Activated CD4-positive, alpha-beta T cell treated with anti-CD3 and anti-CD28 coated beads, Interleukin-2, amount 10 ng/mL, durations not matched to agents 24 days and 14 days (primary cell): ENCODE measurements at regions of chr3 and their contacts with region 1.

Region 1: DNA sequence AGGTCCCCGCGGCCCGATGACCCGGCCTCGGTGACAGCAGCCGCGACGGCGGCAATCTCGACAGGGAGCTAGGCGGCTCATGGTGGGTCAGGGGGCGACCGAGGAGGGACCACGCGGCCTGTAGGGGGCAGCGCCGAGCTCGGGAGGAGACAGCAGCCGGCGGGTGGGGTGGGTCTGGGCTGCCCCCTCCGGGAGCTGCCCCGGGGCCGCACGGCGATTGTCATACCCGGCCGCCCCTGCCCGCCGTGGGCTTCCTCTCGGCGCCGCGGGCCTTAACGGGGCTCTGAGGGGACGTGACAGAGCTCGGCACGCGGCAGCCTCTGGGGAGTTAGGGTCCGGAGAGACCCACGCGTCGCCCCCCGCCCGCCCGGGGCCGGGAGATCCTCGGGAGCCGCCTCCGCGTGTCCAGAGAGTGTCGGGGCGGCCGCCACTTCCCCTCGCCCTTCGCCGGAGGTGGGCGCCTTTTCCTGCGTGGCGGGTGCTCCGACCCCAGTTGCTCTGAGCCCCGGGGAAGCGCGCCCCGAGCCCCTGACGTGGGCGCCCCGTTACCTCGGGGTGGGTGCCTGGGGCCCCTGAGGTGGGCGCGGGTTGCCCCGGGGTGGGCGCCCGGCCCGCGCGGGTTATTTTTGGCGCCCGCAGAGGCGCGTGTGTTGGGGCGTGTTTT is 539 bp upstream of the PLCL2 start:
- DNase-seq: peak; percentile 89
- H3K4me3 Mint-ChIP-seq: peak overlapping the region; percentile 92
- H3K27ac Mint-ChIP-seq: peak overlapping the region; percentile 98
- H3K4me1 Mint-ChIP-seq: peaks cover 32% of the 10 kb centered on the region
- H3K27me3 Mint-ChIP-seq: peaks cover 10% of the 10 kb centered on the region

Region 2: GRCh38 chr3:16264708-16265454 is 619.3 kb before region 1 on chr3 and contains the starts of genes DPH3 and OXNAD1:
- intact Hi-C with region 1: loop called (anchors 5 kb)
- DNase-seq: peak; percentile 100
- H3K4me3 Mint-ChIP-seq: peak within 1 kb of the TSS; percentile 97
- H3K27ac Mint-ChIP-seq: peak within 1 kb of the TSS; percentile 98
- H3K4me1 Mint-ChIP-seq: peaks cover 33% of the 10 kb centered on the region
- H3K27me3 Mint-ChIP-seq: no peaks in the 10 kb centered on the region
- total RNA-seq, gene DPH3: 27.6 and 30.1 TPM in 2 replicates
- total RNA-seq, gene OXNAD1: 27.1 and 29.8 TPM in 2 replicates

Region 3: GRCh38 chr3:16482770-16483531 is 401.3 kb before region 1 on chr3:
- intact Hi-C with region 1: no loop called
- DNase-seq: peak; percentile 81
- H3K4me3 Mint-ChIP-seq: peak overlapping the region; percentile 69
- H3K27ac Mint-ChIP-seq: peak overlapping the region; percentile 69
- H3K4me1 Mint-ChIP-seq: peaks cover 72% of the 10 kb centered on the region
- H3K27me3 Mint-ChIP-seq: no peaks in the 10 kb centered on the region

Region 4: DNA sequence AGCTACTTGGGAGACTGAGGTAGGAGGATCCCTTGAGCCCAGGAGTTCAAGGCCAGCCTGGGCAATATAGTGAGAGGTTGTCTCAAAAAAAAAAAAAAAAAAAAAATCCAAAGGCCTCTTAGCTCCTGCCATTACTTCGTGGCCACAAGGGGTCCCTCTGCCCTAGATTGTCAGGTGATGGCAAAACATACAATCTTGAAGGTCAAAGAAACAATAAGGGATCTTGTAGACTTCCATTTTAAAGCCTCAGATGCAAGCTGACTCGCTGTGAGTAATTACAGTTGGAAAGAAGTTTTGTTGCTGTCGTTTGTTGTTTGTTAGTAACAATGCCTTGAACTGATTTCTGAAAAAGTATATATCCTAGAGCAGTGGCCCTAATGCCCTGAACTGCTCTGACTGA is 55.4 kb before region 1 on chr3:
- intact Hi-C with region 1: loop called (anchors 2 kb)
- DNase-seq: peak; percentile 84
- H3K4me3 Mint-ChIP-seq: no peak overlapping the region
- H3K27ac Mint-ChIP-seq: no peak overlapping the region
- H3K4me1 Mint-ChIP-seq: peaks cover 16% of the 10 kb centered on the region
- H3K27me3 Mint-ChIP-seq: peaks cover 9% of the 10 kb centered on the region

Region 5: DNA sequence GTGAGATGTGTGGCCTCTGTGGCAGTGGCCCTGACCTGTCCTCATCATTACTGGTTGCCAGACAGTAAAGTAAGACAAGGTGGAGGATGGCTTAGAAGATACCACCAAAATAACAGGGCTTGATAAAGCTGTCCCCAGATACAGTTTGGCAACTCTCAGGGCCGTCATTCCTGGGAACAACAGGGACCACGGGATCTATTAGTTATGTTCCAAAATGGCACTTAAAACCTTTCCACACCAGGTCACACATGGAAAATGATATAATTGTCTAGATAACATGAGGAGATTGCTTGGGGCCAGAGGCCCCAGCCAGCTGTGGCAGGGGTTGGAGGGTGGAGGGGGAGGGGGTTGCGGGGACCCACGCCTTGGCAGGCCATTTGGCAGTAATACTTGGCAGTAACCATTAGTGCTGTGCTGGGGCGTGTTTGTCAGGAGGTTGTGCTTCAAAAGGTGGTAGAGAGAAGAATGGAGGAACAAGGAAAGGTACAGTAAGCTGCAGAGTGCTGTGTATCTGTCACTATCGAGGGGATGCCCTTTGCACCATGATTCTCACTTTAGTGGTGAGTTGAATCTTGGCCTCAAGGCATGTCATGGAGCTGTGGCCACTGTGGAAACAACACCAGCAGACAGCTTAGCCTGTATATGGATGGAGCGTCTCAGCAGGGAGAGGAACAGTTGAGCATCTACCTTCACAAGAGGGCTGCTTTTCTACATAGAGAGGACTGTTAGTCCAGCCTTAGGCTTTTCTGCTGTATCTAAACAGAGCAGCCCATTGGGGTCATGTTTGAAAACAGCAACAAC is 14.6 kb after region 1 on chr3:
- intact Hi-C with region 1: loop called (anchors 1 kb)
- DNase-seq: no peak
- H3K4me3 Mint-ChIP-seq: peak overlapping the region; percentile 20
- H3K27ac Mint-ChIP-seq: no peak overlapping the region
- H3K4me1 Mint-ChIP-seq: peaks cover 75% of the 10 kb centered on the region
- H3K27me3 Mint-ChIP-seq: no peaks in the 10 kb centered on the region

Region 6: GRCh38 chr3:16961621-16962205 is 77.5 kb after region 1 on chr3:
- intact Hi-C with region 1: no loop called
- DNase-seq: no peak
- H3K4me3 Mint-ChIP-seq: no peak overlapping the region
- H3K27ac Mint-ChIP-seq: no peak overlapping the region
- H3K4me1 Mint-ChIP-seq: peaks cover 3% of the 10 kb centered on the region
- H3K27me3 Mint-ChIP-seq: no peaks in the 10 kb centered on the region

Region 7: DNA sequence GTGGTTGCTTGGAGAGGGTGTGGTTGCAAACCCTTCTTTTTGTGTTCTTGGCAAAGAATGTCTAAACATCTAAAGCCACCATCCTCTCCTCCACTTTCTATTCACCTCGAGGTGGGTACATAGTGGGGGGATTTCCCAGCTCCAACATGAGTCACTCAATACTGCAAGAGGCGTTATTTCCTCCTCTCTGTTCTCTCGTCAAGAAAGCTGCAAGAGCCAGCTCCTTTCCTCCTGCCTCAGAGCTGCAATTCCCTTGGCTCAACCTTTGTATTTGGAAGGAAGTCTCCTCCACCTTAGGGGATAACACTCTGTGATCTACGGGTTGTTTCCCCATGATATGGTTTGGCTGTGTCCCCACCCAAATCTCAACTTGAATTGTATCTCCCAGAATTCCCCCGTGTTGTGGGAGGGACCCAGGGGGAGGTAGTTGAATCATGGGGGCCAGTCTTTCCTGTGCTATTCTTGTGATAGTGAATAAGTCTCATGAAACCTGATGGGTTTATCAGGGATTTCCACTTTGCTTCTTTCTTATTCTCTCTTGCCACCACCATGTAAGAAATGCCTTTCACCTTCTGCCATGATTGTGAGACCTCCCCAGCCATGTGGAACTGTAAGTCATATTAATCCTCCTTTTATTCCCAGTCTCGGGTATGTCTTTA is 138.9 kb after region 1 on chr3:
- intact Hi-C with region 1: loop called (anchors 2 kb)
- DNase-seq: peak; percentile 87
- H3K4me3 Mint-ChIP-seq: peak overlapping the region; percentile 61
- H3K27ac Mint-ChIP-seq: peak overlapping the region; percentile 88
- H3K4me1 Mint-ChIP-seq: peaks cover 52% of the 10 kb centered on the region
- H3K27me3 Mint-ChIP-seq: no peaks in the 10 kb centered on the region

Region 8: GRCh38 chr3:17151598-17152373 is 267.6 kb after region 1 on chr3:
- intact Hi-C with region 1: loop called (anchors 1 kb)
- DNase-seq: peak; percentile 97
- H3K4me3 Mint-ChIP-seq: peak overlapping the region; percentile 80
- H3K27ac Mint-ChIP-seq: peak overlapping the region; percentile 93
- H3K4me1 Mint-ChIP-seq: peaks cover 66% of the 10 kb centered on the region
- H3K27me3 Mint-ChIP-seq: no peaks in the 10 kb centered on the region

Region 9: DNA sequence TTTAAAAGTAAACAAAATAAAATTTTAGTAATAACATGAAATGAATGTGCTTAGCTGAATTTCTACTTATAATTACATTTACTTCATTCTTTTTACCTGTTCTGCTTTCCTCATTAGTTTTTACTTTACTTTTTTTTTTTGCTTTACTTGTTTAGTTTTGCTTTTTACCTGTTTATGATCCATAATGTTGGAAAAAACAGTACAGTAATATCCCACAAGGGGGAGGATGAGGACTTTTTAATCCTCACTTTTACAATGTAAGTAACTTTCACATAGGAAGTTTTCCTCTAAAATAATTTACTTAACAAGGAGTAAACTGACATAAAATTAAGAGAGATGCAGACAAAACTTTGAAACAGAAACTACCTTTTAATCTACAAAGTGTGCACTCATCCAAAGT is 589.5 kb after region 1 on chr3:
- intact Hi-C with region 1: no loop called
- DNase-seq: no peak
- H3K4me3 Mint-ChIP-seq: no peak overlapping the region
- H3K27ac Mint-ChIP-seq: no peak overlapping the region
- H3K4me1 Mint-ChIP-seq: no peaks in the 10 kb centered on the region
- H3K27me3 Mint-ChIP-seq: no peaks in the 10 kb centered on the region

Region 10: DNA sequence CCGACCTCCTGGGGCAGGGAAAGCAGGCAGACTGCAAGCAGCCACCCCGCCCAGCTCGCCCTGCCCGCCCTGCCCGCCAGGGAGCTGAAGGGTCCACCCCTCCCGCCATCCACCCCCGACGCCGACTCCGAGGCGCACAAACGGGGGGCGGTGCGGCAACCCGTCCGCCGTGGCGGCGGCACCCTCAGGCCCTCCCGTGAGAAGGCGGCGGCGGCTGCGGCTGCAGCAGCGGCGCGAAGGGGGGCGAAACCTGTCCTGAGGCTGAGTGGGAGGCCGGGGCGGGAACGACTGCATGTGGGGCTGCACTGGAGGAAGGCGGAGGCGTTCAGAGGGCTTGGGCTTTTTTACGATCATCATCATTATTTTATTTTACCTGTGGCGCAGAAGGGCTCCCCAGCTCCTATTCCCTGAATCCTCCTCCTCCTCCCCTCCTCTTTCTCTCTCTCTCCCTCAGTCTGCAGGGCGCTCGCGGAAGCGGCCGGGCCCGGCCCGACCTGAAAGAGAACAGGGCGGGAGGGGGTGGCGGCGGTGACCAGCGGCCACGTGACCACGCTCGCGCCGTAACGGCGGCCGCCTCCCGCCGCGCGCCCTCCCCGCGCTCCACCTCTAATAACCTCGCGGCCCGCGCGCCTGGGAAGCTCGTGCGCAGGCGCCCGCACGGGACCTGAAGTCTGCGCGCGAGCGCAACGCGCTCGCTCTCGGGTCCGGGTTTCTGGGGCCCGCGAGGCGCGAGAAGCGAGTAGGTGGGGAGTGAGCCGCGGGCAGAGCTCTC is 858.1 kb after region 1 on chr3 and contains the start of gene TBC1D5:
- intact Hi-C with region 1: loop called (anchors 10 kb)
- DNase-seq: peak; percentile 97
- H3K4me3 Mint-ChIP-seq: peak within 1 kb of the TSS; percentile 95
- H3K27ac Mint-ChIP-seq: peak within 1 kb of the TSS; percentile 98
- H3K4me1 Mint-ChIP-seq: peaks cover 34% of the 10 kb centered on the region
- H3K27me3 Mint-ChIP-seq: no peaks in the 10 kb centered on the region
- total RNA-seq, gene TBC1D5: 38.5 and 39.0 TPM in 2 replicates